Naive thymus-derived CD4-positive, alpha-beta T cell (primary cell): ENCODE measurements at regions of chr7 and their contacts with region 1.

Region 1: GRCh38 chr7:43612599-43613589 is 30.0 kb downstream of the STK17A start:
- DNase-seq: no peak
- ATAC-seq: peak; percentile 30
- H3K4me3 ChIP-seq: no peak overlapping the region
- H3K4me3 Mint-ChIP-seq: peak overlapping the region; percentile 36 to 71 (median 52)
- H3K27ac ChIP-seq: peak overlapping the region; percentile 49
- H3K27ac Mint-ChIP-seq: peak overlapping the region in 8 of 9 donors; percentile 68 to 91 (median 78)
- H3K4me1 ChIP-seq: peaks cover 64 to 74% of the 10 kb centered on the region in 2 donors
- H3K4me1 Mint-ChIP-seq: peaks cover 44 to 77% (median 58%) of the 10 kb centered on the region in 7 donors
- H3K27me3 ChIP-seq: no peaks in the 10 kb centered on the region
- H3K27me3 Mint-ChIP-seq: no peaks in the 10 kb centered on the region

Region 2: GRCh38 chr7:43535810-43536585 is 76.9 kb before region 1 on chr7:
- CTCF ChIA-PET with region 1: no interaction called
- POLR2A ChIA-PET with region 1: no interaction called
- intact Hi-C with region 1: no loop called
- DNase-seq: no peak
- ATAC-seq: no peak
- H3K4me3 ChIP-seq: no peak overlapping the region
- H3K4me3 Mint-ChIP-seq: no peak overlapping the region
- H3K27ac ChIP-seq: no peak overlapping the region
- H3K27ac Mint-ChIP-seq: no peak overlapping the region
- H3K4me1 ChIP-seq: no peaks in the 10 kb centered on the region
- H3K4me1 Mint-ChIP-seq: no peaks in the 10 kb centered on the region
- H3K27me3 ChIP-seq: no peaks in the 10 kb centered on the region
- H3K27me3 Mint-ChIP-seq: peaks cover 0 to 4% (median 0%) of the 10 kb centered on the region in 5 donors

Region 3: DNA sequence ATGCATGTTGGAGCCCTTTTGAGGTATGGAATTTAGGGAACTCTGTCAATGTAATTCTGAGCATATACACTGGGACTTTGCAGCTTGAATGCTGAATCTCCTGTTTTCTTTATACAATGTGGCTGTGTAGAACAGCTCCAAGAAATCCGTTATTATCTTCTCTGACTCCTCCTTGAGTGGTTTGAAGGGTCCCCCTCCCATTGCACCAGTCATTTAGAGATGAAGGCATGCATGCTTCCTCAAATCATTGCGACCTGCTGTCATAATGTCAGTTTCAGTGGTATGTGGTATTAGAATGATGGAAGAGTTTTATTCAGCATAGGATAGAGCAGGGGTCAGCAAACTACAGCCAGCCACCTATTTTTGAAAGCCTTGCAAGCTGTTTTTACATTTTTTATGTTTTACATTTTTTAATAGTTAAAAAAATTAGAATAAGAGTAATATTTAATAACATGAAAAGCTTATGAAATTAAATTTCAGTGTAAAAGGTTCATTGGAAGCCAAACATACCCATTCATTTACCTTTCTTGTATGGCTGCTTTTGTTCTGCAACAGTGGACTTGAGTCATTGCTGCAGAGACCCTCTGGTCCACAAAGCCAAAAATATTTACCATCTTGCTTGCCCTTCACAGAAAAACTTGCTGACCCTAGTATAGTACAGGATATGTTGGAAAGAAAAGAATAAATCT is 21.9 kb before region 1 on chr7:
- CTCF ChIA-PET with region 1: interaction called, 3 read pairs
- POLR2A ChIA-PET with region 1: interaction called, 8 read pairs
- intact Hi-C with region 1: loop called in 1 of 2 experiments (anchors 2 kb)
- DNase-seq: peak in 1 of 9 donors; percentile 27
- ATAC-seq: no peak
- H3K4me3 ChIP-seq: peak overlapping the region; percentile 33
- H3K4me3 Mint-ChIP-seq: peak overlapping the region; percentile 62 to 92 (median 78)
- H3K27ac ChIP-seq: peak overlapping the region; percentile 67
- H3K27ac Mint-ChIP-seq: peak overlapping the region; percentile 15 to 94 (median 85)
- H3K4me1 ChIP-seq: peaks cover 77 to 78% of the 10 kb centered on the region in 2 donors
- H3K4me1 Mint-ChIP-seq: peaks cover 55 to 91% (median 80%) of the 10 kb centered on the region in 7 donors
- H3K27me3 ChIP-seq: no peaks in the 10 kb centered on the region
- H3K27me3 Mint-ChIP-seq: no peaks in the 10 kb centered on the region

Region 4: DNA sequence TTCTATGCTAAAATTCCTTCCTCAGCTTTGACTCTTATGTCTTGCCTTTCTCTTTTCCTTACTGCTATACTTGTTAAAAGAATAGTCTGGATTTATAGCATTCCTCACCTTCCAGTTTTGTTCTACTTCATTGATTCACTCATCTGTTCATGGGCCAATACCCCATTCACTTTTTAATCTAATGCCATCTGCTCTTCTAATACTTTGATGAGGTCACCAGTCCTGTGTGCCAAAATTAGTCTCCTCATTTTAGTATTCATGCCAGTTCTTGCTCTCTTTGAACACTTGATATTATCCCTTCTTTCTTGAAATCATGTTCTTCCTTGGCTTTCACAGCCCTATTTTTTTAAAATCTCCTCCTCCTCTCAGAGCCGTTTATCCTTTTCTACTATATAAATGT is 10.6 kb before region 1 on chr7:
- CTCF ChIA-PET with region 1: no interaction called
- POLR2A ChIA-PET with region 1: interaction called, 7 read pairs
- intact Hi-C with region 1: loop called in 1 of 2 experiments (anchors 1 kb)
- DNase-seq: no peak
- ATAC-seq: no peak
- H3K4me3 ChIP-seq: no peak overlapping the region
- H3K4me3 Mint-ChIP-seq: no peak overlapping the region
- H3K27ac ChIP-seq: peak overlapping the region; percentile 49
- H3K27ac Mint-ChIP-seq: no peak overlapping the region
- H3K4me1 ChIP-seq: peaks cover 63 to 65% of the 10 kb centered on the region in 2 donors
- H3K4me1 Mint-ChIP-seq: peaks cover 26 to 50% (median 29%) of the 10 kb centered on the region in 7 donors
- H3K27me3 ChIP-seq: no peaks in the 10 kb centered on the region
- H3K27me3 Mint-ChIP-seq: no peaks in the 10 kb centered on the region

Region 5: GRCh38 chr7:43625453-43625852 is 12.6 kb after region 1 on chr7:
- CTCF ChIA-PET with region 1: no interaction called
- POLR2A ChIA-PET with region 1: interaction called, 8 read pairs
- intact Hi-C with region 1: loop called in 1 of 2 experiments (anchors 1 kb)
- DNase-seq: peak in 7 of 9 donors; percentile 56 to 75 (median 68)
- ATAC-seq: peak; percentile 89
- H3K4me3 ChIP-seq: no peak overlapping the region
- H3K4me3 Mint-ChIP-seq: peak overlapping the region in 9 of 10 donors; percentile 54 to 90 (median 76)
- H3K27ac ChIP-seq: peak overlapping the region; percentile 63
- H3K27ac Mint-ChIP-seq: peak overlapping the region in 7 of 9 donors; percentile 71 to 97 (median 90)
- H3K4me1 ChIP-seq: peaks cover 65 to 76% of the 10 kb centered on the region in 2 donors
- H3K4me1 Mint-ChIP-seq: peaks cover 3 to 96% (median 76%) of the 10 kb centered on the region in 7 donors
- H3K27me3 ChIP-seq: no peaks in the 10 kb centered on the region
- H3K27me3 Mint-ChIP-seq: no peaks in the 10 kb centered on the region

Region 6: DNA sequence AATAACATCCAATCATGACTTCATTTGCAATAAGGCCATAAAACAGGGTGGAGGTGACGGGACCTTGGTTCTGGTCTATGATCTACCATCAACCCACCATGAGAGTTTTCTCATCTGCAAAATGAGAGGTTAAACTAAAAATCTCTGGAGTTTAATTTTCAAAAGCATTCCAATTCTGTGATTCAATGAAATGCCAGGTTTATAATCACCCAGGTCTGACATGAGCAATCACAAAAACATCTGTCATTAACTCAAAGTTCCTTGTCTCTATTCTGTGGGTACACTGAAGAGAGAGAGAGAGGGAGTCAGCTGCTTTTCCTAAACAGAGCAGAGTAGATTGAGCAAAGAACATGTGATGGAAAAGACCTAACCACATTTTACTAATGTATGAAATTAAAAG is 802.2 kb after region 1 on chr7:
- CTCF ChIA-PET with region 1: no interaction called
- POLR2A ChIA-PET with region 1: no interaction called
- intact Hi-C with region 1: no loop called
- DNase-seq: no peak
- ATAC-seq: no peak
- H3K4me3 ChIP-seq: no peak overlapping the region
- H3K4me3 Mint-ChIP-seq: no peak overlapping the region
- H3K27ac ChIP-seq: no peak overlapping the region
- H3K27ac Mint-ChIP-seq: peak overlapping the region in 2 of 9 donors; percentile 6 to 28
- H3K4me1 ChIP-seq: no peaks in the 10 kb centered on the region
- H3K4me1 Mint-ChIP-seq: peaks cover 13 to 55% (median 43%) of the 10 kb centered on the region in 7 donors
- H3K27me3 ChIP-seq: no peaks in the 10 kb centered on the region
- H3K27me3 Mint-ChIP-seq: no peaks in the 10 kb centered on the region